AG04450 (cell line): ENCODE measurements at regions of chr11 and their contacts with region 1.

Region 1: GRCh38 chr11:63938479-63939396 is at the start of gene NAA40:
- DNase-seq: peak; percentile 90
- H3K4me3 ChIP-seq: peak within 1 kb of the TSS; percentile 94
- H3K27ac ChIP-seq: peak within 1 kb of the TSS; percentile 33
- H3K27me3 ChIP-seq: no peaks in the 10 kb centered on the region
- CTCF ChIP-seq: no peak
- polyA plus RNA-seq, gene NAA40: 17.4 and 18.0 TPM in 2 replicates

Region 2: GRCh38 chr11:63813035-63813562 is 125.6 kb before region 1 on chr11 and contains the start of gene SPINDOC:
- CTCF ChIA-PET with region 1: no interaction called
- POLR2A ChIA-PET with region 1: no interaction called
- DNase-seq: no peak
- H3K4me3 ChIP-seq: peak within 1 kb of the TSS; percentile 95
- H3K27ac ChIP-seq: peak within 1 kb of the TSS; percentile 39
- H3K27me3 ChIP-seq: no peaks in the 10 kb centered on the region
- CTCF ChIP-seq: no peak
- polyA plus RNA-seq, gene SPINDOC: 15.8 and 20.9 TPM in 2 replicates

Region 3: DNA sequence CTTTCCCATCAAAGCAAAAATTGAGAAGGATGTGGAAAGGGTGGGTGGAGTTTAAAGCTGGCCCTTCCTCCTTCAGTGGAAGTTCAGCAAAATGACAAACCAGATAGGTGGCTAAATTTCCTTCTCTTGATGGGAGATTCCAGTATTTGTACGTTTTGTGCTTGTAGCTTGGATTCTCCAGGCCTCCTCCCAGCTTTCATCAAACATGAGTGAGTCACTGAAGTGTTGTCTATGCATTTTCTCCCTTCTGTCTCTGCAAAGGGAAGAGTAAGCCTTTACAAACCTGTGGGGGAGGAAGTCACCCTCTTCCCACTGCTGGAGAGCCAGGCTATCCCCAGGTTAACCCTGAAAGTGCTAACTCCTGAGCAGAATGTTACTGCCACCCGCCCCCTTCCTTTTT is 93.4 kb before region 1 on chr11:
- CTCF ChIA-PET with region 1: interaction called, 11 read pairs
- POLR2A ChIA-PET with region 1: no interaction called
- DNase-seq: peak; percentile 47
- H3K4me3 ChIP-seq: no peak overlapping the region
- H3K27ac ChIP-seq: peak overlapping the region; percentile 68
- H3K27me3 ChIP-seq: no peaks in the 10 kb centered on the region
- CTCF ChIP-seq: no peak

Region 4: GRCh38 chr11:63888170-63889086 is 50.3 kb before region 1 on chr11:
- CTCF ChIA-PET with region 1: no interaction called
- POLR2A ChIA-PET with region 1: no interaction called
- DNase-seq: no peak
- H3K4me3 ChIP-seq: no peak overlapping the region
- H3K27ac ChIP-seq: peak overlapping the region; percentile 11
- H3K27me3 ChIP-seq: no peaks in the 10 kb centered on the region
- CTCF ChIP-seq: no peak

Region 5: DNA sequence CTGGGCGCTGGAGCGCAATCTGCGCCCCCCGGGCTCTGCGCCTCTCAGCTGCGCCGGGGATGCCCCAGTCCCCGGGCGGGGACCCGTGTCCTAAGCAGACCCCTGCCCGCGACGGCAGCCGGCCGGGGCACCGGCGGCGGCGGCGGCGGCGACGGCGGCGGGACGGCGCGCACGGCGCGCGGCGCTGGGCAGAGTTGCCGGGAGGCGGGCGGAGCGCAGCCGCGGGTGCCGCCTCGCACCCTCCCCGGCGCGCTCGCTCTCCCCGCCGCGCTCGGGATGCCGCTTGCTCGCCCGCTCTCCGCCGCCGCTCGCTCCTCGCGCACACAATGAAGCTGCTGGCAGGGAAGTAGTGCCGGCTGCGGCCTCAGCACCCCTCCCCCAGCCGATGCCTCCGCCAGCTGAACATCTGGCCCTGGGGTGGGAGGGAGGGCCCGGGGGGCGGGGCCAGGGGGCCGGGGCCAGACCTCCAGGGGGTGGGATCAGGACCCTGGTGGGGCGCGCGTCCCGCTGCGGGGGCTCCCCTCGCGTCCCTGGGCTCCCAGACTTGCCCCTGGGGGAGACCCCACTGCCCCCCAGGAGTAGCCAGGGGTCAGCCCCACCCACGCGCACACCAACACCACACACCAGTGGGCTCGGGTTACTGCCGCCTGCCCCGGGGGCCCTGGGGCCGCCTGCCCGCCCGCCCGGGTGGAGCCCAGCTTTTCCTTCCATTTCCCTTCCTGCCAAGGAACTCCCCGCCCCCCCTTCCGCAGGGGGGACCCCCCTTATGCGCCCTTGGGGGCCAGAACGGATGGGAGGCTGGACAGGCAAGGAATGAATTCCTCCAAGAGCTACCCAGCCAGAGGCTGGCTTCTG is 21.7 kb before region 1 on chr11 and contains the start of gene RCOR2:
- CTCF ChIA-PET with region 1: interaction called, 11 read pairs
- POLR2A ChIA-PET with region 1: interaction called, 3 read pairs
- DNase-seq: peak; percentile 69
- H3K4me3 ChIP-seq: peak within 1 kb of the TSS; percentile 63
- H3K27ac ChIP-seq: peak within 1 kb of the TSS; percentile 47
- H3K27me3 ChIP-seq: no peaks in the 10 kb centered on the region
- CTCF ChIP-seq: no peak
- polyA plus RNA-seq, gene RCOR2: 4.4 and 5.2 TPM in 2 replicates

Region 6: GRCh38 chr11:63958008-63958407 is 19.3 kb after region 1 on chr11:
- CTCF ChIA-PET with region 1: no interaction called
- POLR2A ChIA-PET with region 1: no interaction called
- DNase-seq: no peak
- H3K4me3 ChIP-seq: no peak overlapping the region
- H3K27ac ChIP-seq: no peak overlapping the region
- H3K27me3 ChIP-seq: no peaks in the 10 kb centered on the region
- CTCF ChIP-seq: no peak